ENCODE measurements at regions of chr1 and their contacts with region 1.

Region 1: GRCh38 chr1:113928941-113929749 is at the start of gene HIPK1:
- DNase-seq: peak; percentile 98
- total RNA-seq, gene HIPK1: 68.9 to 78.9 TPM

Region 2: DNA sequence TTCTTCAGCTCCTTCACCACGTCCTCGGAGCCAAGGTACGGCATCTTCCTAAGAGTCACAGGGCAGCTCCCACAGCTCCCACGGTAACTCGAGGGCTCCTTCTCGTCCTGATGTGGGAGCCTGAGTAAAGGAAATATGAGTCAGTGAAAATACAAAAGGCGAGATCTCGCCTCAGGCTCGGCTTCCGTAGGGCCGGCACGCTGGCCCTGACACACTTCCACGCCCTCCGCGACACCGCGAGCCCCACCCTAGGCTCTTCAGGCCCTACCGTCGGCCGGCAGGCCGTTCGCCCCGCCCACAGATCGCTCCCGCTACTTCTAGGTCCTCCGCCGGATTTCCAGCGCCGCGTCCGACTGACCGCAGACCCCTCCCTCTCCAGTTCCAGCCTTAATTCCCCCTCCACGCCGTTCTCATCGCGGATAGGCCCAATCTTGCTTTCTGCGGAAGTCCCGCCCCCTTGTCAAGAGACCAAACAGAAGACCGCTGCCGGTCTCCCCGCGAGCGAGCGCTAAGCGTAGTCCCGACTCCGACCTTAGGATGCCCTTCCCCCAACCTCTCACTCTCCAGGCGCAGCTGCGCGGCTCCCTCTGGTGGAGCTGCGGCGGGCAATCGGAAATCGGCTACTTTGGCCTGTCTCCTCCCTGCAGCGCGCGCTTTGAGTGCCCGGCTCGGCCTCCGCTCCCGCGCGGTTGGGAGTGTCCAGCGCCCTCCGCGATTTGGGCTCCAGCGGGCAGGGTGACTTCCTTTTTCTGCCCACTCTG is 24.3 kb before region 1 on chr1 and contains the starts of genes AP4B1 and DCLRE1B:
- intact Hi-C with region 1: loop called in 1 of 2 experiments (anchors 2 kb)
- DNase-seq: peak; percentile 100
- total RNA-seq, gene AP4B1: 8.3 to 20.0 TPM
- total RNA-seq, gene DCLRE1B: 5.3 to 5.5 TPM

Measured in posterior vena cava (tissue), 2 donors.